IMR-90 (cell line): ENCODE measurements at regions of chr7 and their contacts with region 1.

Region 1: GRCh38 chr7:100889761-100890634 is 483 bp upstream of the UFSP1 start:
- DNase-seq: peak; percentile 90
- ATAC-seq: peak; percentile 90
- H3K4me3 ChIP-seq: peak overlapping the region; percentile 56
- H3K27ac ChIP-seq: peak overlapping the region; percentile 91
- H3K4me1 ChIP-seq: peaks cover 16% of the 10 kb centered on the region
- H3K27me3 ChIP-seq: peaks cover 2% of the 10 kb centered on the region; the same call in 1 of the 2 replicates
- CTCF ChIP-seq: no peak
- POLR2A ChIP-seq: 0 out of 2 replicates have a peak, but pooled peaks have one; percentile 8
- RAD21 ChIP-seq: no peak

Region 2: DNA sequence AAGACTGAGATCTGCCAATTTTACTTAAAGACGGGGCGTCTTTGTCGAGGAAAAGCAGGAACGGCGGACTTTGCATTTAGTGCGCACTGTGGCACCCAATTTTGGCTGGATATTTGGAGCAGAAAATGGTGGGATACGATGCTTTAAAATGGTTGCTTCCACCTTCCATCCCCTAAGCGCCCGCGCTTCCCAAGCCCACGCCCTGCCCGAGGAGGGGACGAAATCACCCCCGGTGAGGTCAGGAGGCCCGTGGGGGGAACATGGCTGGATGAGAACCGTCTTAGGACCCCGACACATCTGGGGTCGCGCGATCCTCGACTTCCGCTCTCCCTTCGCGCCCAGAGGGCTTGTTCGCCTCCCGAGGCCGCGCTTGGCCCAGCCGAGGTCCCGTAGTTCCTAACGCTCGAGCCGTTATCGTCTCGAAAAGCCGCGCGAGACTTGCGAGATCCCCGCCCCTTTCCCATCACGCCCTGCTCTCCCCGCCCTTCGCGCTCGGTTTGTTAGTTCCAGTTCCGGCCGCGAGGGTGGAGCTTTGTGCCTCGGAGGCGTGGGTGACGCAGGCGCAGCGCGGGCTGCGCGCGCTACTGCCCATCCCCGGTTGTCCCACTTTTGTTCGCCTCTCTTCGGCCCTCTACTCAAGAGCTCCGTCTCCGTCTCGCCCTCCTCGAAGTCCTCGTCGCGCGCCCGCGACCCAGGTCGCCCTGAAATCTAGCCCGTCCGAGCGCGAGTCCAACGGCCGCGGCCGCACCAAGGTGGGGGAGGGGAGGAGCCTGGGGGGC is 15.2 kb before region 1 on chr7 and contains the start of gene SRRT:
- CTCF ChIA-PET with region 1: no interaction called
- POLR2A ChIA-PET with region 1: interaction called, 15 read pairs
- dilution Hi-C with region 1: no loop called
- in situ Hi-C with region 1: no loop called
- intact Hi-C with region 1: no loop called
- DNase-seq: peak; percentile 97
- ATAC-seq: peak; percentile 98
- H3K4me3 ChIP-seq: peak within 1 kb of the TSS; percentile 76
- H3K27ac ChIP-seq: peak within 1 kb of the TSS; percentile 99
- H3K4me1 ChIP-seq: peaks cover 9% of the 10 kb centered on the region
- H3K27me3 ChIP-seq: no peaks in the 10 kb centered on the region
- CTCF ChIP-seq: 0 out of 2 replicates have a peak, but pooled peaks have one; percentile 24
- POLR2A ChIP-seq: peak; percentile 93
- RAD21 ChIP-seq: no peak
- total RNA-seq, gene SRRT: 41.4 and 45.3 TPM in 2 replicates

Region 3: GRCh38 chr7:101058355-101058754 is 168.4 kb after region 1 on chr7:
- CTCF ChIA-PET with region 1: interaction called, 5 read pairs
- POLR2A ChIA-PET with region 1: no interaction called
- dilution Hi-C with region 1: no loop called
- in situ Hi-C with region 1: loop called (anchors 5 kb)
- intact Hi-C with region 1: no loop called
- DNase-seq: peak; percentile 50
- ATAC-seq: peak; percentile 74
- H3K4me3 ChIP-seq: no peak overlapping the region
- H3K27ac ChIP-seq: no peak overlapping the region
- H3K4me1 ChIP-seq: no peaks in the 10 kb centered on the region
- H3K27me3 ChIP-seq: peaks cover 25% of the 10 kb centered on the region
- CTCF ChIP-seq: no peak
- POLR2A ChIP-seq: no peak
- RAD21 ChIP-seq: no peak

Region 4: DNA sequence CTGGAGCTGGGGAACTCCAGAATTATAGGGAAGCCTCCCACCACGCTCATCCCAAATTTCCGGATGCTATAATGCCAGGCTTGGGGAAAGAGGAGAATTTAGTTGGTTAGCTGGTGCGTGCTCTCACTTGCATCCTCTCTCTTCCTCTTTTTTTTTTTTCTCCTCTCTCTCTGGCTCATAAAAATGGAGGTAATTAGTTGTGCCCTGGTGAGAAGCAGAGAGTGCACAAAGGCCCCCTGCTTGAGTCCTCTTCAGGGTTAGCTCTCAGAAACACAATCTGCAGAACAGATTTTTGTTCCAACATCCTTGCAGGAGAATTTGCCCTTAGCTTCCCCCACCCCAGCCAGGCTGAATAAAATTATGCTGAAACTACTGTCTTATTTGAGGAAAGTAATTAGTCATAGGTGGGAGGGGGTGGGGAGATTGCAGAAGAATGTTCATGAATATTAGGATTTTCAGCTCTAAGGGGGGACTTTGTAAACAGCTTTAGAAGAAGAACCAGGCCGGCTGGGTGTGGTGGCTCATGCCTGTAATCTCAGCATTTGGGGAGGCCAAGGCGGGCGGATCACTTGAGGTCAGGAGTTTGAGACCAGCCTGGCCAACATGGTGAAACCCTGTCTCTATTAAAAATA is 244.5 kb after region 1 on chr7:
- CTCF ChIA-PET with region 1: no interaction called
- POLR2A ChIA-PET with region 1: no interaction called
- dilution Hi-C with region 1: no loop called
- in situ Hi-C with region 1: no loop called
- intact Hi-C with region 1: no loop called
- DNase-seq: no peak
- ATAC-seq: no peak
- H3K4me3 ChIP-seq: no peak overlapping the region
- H3K27ac ChIP-seq: peak overlapping the region; percentile 26; the same call in 1 of the 2 replicates
- H3K4me1 ChIP-seq: peaks cover 18% of the 10 kb centered on the region; the same call in 1 of the 2 replicates
- H3K27me3 ChIP-seq: no peaks in the 10 kb centered on the region
- CTCF ChIP-seq: no peak
- POLR2A ChIP-seq: peak; percentile 41
- RAD21 ChIP-seq: no peak

Region 5: GRCh38 chr7:101244375-101245146 is 354.6 kb after region 1 on chr7 and contains the start of gene FIS1:
- CTCF ChIA-PET with region 1: no interaction called
- POLR2A ChIA-PET with region 1: no interaction called
- dilution Hi-C with region 1: no loop called
- in situ Hi-C with region 1: no loop called
- intact Hi-C with region 1: loop called (anchors 1 kb)
- DNase-seq: peak; percentile 82
- ATAC-seq: peak; percentile 97
- H3K4me3 ChIP-seq: peak within 1 kb of the TSS; percentile 73
- H3K27ac ChIP-seq: peak within 1 kb of the TSS; percentile 94
- H3K4me1 ChIP-seq: peaks cover 5% of the 10 kb centered on the region; the same call in 1 of the 2 replicates
- H3K27me3 ChIP-seq: no peaks in the 10 kb centered on the region
- CTCF ChIP-seq: peak; percentile 83
- POLR2A ChIP-seq: peak; percentile 45; the same call in 1 of the 2 replicates
- RAD21 ChIP-seq: peak; percentile 60; the same call in 1 of the 2 replicates
- total RNA-seq, gene FIS1: 241 and 293 TPM in 2 replicates

Region 6: GRCh38 chr7:101287032-101287431 is 397.0 kb after region 1 on chr7:
- CTCF ChIA-PET with region 1: no interaction called
- POLR2A ChIA-PET with region 1: no interaction called
- dilution Hi-C with region 1: no loop called
- in situ Hi-C with region 1: loop called (anchors 10 kb)
- intact Hi-C with region 1: no loop called
- DNase-seq: no peak
- ATAC-seq: no peak
- H3K4me3 ChIP-seq: no peak overlapping the region
- H3K27ac ChIP-seq: no peak overlapping the region
- H3K4me1 ChIP-seq: no peaks in the 10 kb centered on the region
- H3K27me3 ChIP-seq: peaks cover 43% of the 10 kb centered on the region
- CTCF ChIP-seq: no peak
- POLR2A ChIP-seq: no peak
- RAD21 ChIP-seq: no peak